ENCODE measurements at regions of chr19 and their contacts with region 1.

Region 1: GRCh38 chr19:33176670-33177416 is 17.3 kb upstream of the LRP3 start:
- DNase-seq: peak; percentile 97
- H3K4me3 ChIP-seq: peak overlapping the region; percentile 79
- H3K27ac ChIP-seq: peak overlapping the region; percentile 91
- H3K4me1 ChIP-seq: peaks cover 5% of the 10 kb centered on the region
- H3K27me3 ChIP-seq: no peaks in the 10 kb centered on the region
- CTCF ChIP-seq: no peak

Region 2: DNA sequence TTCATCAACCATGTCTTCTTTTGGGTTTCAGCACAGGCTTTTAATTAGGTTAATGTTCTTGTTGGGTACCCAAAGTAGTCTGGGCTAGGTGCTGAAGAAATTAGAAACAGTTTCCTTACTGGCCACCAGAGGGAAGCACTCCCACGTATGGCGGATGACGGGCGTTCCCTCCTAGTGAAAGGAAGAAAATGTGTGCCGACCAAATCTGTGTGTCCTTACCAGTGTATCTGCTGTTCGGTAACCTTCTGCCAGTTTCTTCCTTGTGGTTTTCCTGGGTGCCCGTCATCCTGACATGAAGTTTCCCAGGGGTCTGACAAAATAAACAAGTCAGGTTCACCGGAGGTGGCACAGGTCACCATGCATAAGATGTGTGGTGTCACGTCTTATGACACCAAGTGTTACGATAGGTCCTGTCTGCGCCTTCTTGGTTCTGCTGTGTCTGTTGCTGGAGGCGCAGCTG is 50.9 kb before region 1 on chr19:
- intact Hi-C with region 1: loop called (anchors 5 kb)
- DNase-seq: peak; percentile 45
- H3K4me3 ChIP-seq: no peak overlapping the region
- H3K27ac ChIP-seq: no peak overlapping the region
- H3K4me1 ChIP-seq: no peaks in the 10 kb centered on the region
- H3K27me3 ChIP-seq: no peaks in the 10 kb centered on the region
- CTCF ChIP-seq: peak; percentile 69